Sigmoid colon (tissue), 7 donors: ENCODE measurements at regions of chr7 and their contacts with region 1.

Region 1: DNA sequence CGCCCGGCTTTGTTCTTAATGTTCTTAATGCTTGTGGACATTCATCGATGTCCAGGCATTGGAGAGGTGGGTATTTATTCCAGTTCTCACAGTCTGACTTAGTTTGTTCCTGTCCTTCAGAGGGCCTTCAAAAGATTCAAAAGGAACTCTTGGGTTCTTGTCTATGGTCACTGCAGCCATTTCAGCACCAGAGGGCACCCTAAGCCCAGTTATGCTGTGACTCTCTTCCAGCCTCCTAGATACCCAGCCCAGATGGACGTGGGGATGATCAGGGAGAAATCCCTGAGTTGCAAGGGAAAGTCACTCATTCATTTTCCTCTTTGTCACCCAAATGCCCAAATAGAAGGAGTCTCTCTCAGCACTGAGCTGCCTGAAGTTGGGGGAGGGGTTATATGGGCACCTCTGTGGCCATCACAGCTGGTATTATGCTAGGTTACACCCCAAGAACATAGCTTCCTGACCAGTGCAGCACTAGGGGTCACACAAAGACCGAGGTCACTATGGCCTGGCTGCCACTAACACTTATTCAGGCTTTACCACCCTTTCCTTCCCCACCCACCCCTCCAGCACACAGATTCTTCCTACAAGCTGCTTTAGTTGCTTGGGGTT is 26.5 kb upstream of the CCDC126 start:
- DNase-seq: peak; percentile 79
- H3K4me3 ChIP-seq: no peak overlapping the region
- H3K27ac ChIP-seq: no peak overlapping the region
- H3K4me1 ChIP-seq: no peaks in the 10 kb centered on the region
- H3K27me3 ChIP-seq: peaks cover 0 to 12% (median 0%) of the 10 kb centered on the region in 3 donors
- CTCF ChIP-seq: peak; percentile 65 to 81 (median 72)
- EP300 ChIP-seq: no peak
- POLR2A ChIP-seq: no peak

Region 2: GRCh38 chr7:22559829-22560489 is 1010.7 kb before region 1 on chr7:
- intact Hi-C with region 1: no loop called
- DNase-seq: peak; percentile 84
- H3K4me3 ChIP-seq: no peak overlapping the region
- H3K27ac ChIP-seq: peak overlapping the region in 1 of 4 donors; percentile 83
- H3K4me1 ChIP-seq: peaks cover 0 to 30% (median 20%) of the 10 kb centered on the region in 4 donors
- H3K27me3 ChIP-seq: no peaks in the 10 kb centered on the region
- CTCF ChIP-seq: peak; percentile 86 to 90 (median 88)
- EP300 ChIP-seq: no peak
- POLR2A ChIP-seq: no peak

Region 3: DNA sequence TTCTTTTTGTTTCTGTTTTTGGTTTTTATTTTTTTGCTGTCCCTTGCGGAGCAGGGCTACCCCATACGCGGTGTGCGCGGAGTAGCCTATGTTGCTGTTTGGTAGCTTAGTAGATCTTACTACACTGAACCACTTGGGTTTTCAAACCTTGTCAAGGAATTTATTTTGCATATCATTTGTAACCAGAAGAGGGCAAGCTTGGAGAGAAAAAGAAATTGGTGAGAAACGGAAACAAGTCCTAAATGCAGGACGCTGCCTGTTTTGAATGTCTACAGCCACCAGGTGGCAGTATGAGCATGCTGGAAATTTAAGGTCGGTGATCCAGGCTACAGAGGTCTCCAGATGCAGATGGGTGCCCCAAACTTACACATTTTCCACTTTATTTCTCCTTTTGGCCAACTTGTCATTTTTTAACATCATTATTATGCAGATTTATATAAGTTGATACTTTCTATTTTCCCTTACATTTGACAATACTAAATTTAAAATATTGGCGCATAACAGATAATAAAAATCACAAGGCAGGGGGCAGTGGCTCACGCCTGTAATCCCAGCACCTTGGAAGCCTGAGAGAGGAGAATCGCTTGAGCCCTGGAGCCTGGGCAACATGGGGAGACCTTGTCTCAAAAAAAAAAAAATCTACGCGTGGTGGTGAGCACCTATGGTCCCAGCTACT is 23.7 kb before region 1 on chr7:
- intact Hi-C with region 1: loop called (anchors 2 kb)
- DNase-seq: peak; percentile 86
- H3K4me3 ChIP-seq: no peak overlapping the region
- H3K27ac ChIP-seq: no peak overlapping the region
- H3K4me1 ChIP-seq: no peaks in the 10 kb centered on the region
- H3K27me3 ChIP-seq: no peaks in the 10 kb centered on the region
- CTCF ChIP-seq: peak; percentile 71 to 92 (median 86)
- EP300 ChIP-seq: no peak
- POLR2A ChIP-seq: no peak

Region 4: GRCh38 chr7:23712368-23713284 is 141.9 kb after region 1 on chr7:
- intact Hi-C with region 1: loop called (anchors 1 kb)
- DNase-seq: no peak
- H3K4me3 ChIP-seq: no peak overlapping the region
- H3K27ac ChIP-seq: no peak overlapping the region
- H3K4me1 ChIP-seq: peaks cover 0 to 4% (median 0%) of the 10 kb centered on the region in 4 donors
- H3K27me3 ChIP-seq: no peaks in the 10 kb centered on the region
- CTCF ChIP-seq: peak; percentile 33 to 60 (median 38)
- EP300 ChIP-seq: no peak
- POLR2A ChIP-seq: no peak